WTC11 (cell line): ENCODE measurements at regions of chr7 and their contacts with region 1.

Region 1: GRCh38 chr7:102300643-102301233 is 14.1 kb downstream of the SH2B2 start:
- DNase-seq: peak; percentile 89
- ATAC-seq: peak; percentile 84
- H3K4me3 Mint-ChIP-seq: no peak overlapping the region
- H3K27ac Mint-ChIP-seq: no peak overlapping the region
- H3K4me1 Mint-ChIP-seq: peaks cover 13% of the 10 kb centered on the region
- H3K27me3 Mint-ChIP-seq: peaks cover 19% of the 10 kb centered on the region
- CTCF ChIP-seq: peak; percentile 78

Region 2: DNA sequence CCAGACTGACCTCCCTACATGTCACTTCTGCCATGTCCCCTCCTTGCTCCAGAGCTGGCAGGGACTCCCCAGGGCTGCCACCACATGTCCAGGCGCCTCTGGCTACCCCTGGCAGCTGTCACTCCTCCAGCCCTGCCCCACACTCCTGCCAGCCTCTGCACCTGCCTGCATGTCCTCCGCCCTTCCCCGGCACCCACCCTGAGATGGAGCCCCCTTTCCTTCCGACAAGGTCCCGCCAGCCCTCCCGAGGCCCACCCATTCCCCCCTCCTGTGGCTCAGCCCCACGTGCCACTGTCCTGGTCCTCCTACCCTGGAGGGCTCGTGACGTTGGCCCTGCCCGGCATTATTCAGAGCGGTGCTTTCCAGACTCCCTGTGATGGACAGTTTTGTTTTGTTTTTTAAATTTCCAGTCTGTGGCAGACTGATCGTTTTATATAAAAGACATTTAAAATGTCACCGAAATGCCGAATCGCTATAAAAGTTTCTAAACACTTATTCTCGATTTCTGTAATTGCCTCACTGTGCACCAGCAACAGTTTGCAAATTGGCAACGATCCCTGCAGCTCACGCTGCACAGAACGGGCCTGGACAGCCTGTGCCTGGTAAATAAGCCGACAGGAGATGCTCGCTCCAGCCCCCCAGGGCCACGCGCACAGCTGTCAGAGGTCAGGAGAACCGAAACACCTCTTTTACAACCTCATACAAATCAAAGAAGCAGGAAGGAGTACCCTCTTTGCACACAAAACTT is 125.1 kb before region 1 on chr7:
- CTCF ChIA-PET with region 1: no interaction called
- POLR2A ChIA-PET with region 1: no interaction called
- DNase-seq: no peak
- ATAC-seq: no peak
- H3K4me3 Mint-ChIP-seq: no peak overlapping the region
- H3K27ac Mint-ChIP-seq: peak overlapping the region; percentile 51
- H3K4me1 Mint-ChIP-seq: no peaks in the 10 kb centered on the region
- H3K27me3 Mint-ChIP-seq: no peaks in the 10 kb centered on the region
- CTCF ChIP-seq: no peak

Region 3: GRCh38 chr7:102286237-102287110 is 14.3 kb before region 1 on chr7 and contains the start of gene SH2B2:
- CTCF ChIA-PET with region 1: interaction called, 13 read pairs
- POLR2A ChIA-PET with region 1: interaction called, 3 read pairs
- DNase-seq: peak; percentile 51
- ATAC-seq: peak; percentile 41
- H3K4me3 Mint-ChIP-seq: peak within 1 kb of the TSS; percentile 61
- H3K27ac Mint-ChIP-seq: no peak within 1 kb of the TSS
- H3K4me1 Mint-ChIP-seq: peaks cover 15% of the 10 kb centered on the region
- H3K27me3 Mint-ChIP-seq: peaks cover 10% of the 10 kb centered on the region
- CTCF ChIP-seq: no peak
- total RNA-seq, gene SH2B2: 14.7 to 16.5 TPM (median 15.9 TPM) in 3 replicates

Region 4: DNA sequence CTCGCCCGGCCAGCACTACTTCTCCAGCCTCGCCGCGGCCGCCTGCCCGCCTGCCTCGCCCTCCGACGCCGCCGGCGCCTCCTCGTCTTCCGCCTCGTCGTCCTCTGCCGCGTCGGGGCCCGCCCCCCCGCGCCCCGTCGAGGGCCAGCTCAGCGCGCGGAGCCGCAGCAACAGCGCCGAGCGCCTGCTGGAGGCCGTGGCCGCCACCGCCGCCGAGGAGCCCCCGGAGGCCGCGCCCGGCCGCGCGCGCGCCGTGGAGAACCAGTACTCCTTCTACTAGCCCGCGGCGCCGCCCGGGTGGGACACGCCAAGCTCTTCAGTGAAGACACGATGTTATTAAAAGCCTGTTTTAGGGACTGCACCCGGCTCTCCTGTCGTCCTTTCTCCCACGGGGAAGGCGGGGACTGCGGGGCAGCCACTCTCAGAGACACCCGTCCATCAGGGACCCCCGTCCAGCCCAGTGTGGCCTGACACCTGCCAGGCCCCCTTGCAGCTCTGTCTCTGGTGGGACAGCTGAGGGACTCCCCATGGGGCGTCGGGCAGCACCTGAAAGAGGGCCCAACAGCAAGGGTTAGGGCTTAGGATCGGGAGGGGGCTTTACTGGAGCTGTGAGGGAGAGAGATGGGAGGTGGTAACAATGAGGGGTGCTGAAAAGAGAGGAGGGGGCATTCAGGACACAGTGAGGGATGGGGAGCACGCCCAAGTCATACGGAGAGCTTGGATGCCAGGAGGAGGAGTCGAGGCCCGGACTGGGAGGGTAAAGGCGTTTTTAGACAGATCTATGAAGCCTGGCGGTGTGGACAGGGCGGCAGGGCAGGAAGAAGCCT is 20.8 kb after region 1 on chr7:
- CTCF ChIA-PET with region 1: interaction called, 17 read pairs
- POLR2A ChIA-PET with region 1: no interaction called
- DNase-seq: peak; percentile 74
- ATAC-seq: peak; percentile 74
- H3K4me3 Mint-ChIP-seq: peak overlapping the region; percentile 38
- H3K27ac Mint-ChIP-seq: no peak overlapping the region
- H3K4me1 Mint-ChIP-seq: peaks cover 19% of the 10 kb centered on the region
- H3K27me3 Mint-ChIP-seq: peaks cover 13% of the 10 kb centered on the region
- CTCF ChIP-seq: no peak

Region 5: DNA sequence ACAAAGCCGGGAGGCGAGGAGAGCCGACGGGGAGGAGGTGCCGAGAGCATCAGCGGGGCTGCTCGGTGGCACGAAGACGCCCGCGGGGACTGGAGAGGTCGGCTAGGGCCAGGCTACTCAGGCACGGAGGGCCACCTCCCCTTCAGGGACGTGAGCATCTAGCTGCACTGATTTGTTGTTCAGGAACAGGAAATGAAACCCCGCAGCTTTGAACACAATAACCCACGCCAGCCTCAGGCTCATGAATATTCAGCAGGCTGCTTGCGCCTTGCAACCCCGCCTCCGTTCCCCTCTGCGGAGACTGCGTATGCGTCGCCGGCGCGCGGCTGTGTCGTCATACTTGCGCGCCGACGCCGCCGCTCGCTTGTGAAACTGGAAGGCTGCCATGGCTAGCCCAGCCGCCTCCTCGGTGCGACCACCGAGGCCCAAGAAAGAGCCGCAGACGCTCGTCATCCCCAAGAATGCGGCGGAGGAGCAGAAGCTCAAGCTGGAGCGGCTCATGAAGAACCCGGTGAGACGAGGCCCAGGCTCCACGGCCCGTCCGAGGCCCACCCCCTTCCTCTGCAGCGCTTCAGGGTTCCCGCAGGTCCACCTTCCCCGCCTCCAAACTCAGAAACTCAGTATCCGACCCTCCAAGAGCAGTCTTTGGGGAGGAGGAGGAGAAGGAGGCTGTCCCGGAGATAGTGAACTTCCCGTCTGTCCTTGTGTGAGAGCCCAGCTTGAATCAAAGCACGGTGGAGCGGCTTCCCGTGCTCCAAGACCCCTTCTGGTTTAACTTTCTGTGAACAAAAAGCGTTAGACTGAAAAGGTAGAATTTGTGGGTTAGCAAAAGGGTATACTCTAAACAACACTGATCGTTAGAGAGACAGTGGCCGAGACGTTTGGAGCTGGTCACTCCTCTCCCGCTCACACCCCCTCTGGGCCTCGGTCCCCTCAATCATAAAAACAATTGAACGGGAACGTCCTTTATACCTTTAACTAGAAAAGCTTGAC is 95.6 kb after region 1 on chr7 and contains the start of gene PRKRIP1:
- CTCF ChIA-PET with region 1: interaction called, 10 read pairs
- POLR2A ChIA-PET with region 1: interaction called, 4 read pairs
- DNase-seq: peak; percentile 87
- ATAC-seq: peak; percentile 97
- H3K4me3 Mint-ChIP-seq: peak within 1 kb of the TSS; percentile 88
- H3K27ac Mint-ChIP-seq: peak within 1 kb of the TSS; percentile 99
- H3K4me1 Mint-ChIP-seq: peaks cover 5% of the 10 kb centered on the region
- H3K27me3 Mint-ChIP-seq: no peaks in the 10 kb centered on the region
- CTCF ChIP-seq: no peak
- total RNA-seq, gene PRKRIP1: 27.5 to 34.4 TPM (median 30.1 TPM) in 3 replicates